ENCODE measurements at regions of chr1 and their contacts with region 1.

Region 1: GRCh38 chr1:159132271-159132881 is 39.0 kb upstream of the CADM3 start:
- DNase-seq: peak; percentile 87
- ATAC-seq: peak; percentile 51
- H3K4me3 Mint-ChIP-seq: no peak overlapping the region
- H3K27ac Mint-ChIP-seq: no peak overlapping the region
- H3K4me1 Mint-ChIP-seq: no peaks in the 10 kb centered on the region
- H3K27me3 Mint-ChIP-seq: peaks cover 5% of the 10 kb centered on the region

Region 2: GRCh38 chr1:159122005-159122621 is 10.3 kb before region 1 on chr1:
- CTCF ChIA-PET with region 1: interaction called, 10 read pairs
- POLR2A ChIA-PET with region 1: no interaction called
- intact Hi-C with region 1: no loop called
- DNase-seq: no peak
- ATAC-seq: peak; percentile 70
- H3K4me3 Mint-ChIP-seq: no peak overlapping the region
- H3K27ac Mint-ChIP-seq: no peak overlapping the region
- H3K4me1 Mint-ChIP-seq: peaks cover 15% of the 10 kb centered on the region
- H3K27me3 Mint-ChIP-seq: peaks cover 33% of the 10 kb centered on the region

Region 3: GRCh38 chr1:159161001-159161718 is 28.8 kb after region 1 on chr1:
- CTCF ChIA-PET with region 1: interaction called, 27 read pairs
- POLR2A ChIA-PET with region 1: no interaction called
- intact Hi-C with region 1: loop called (anchors 1 kb)
- DNase-seq: peak; percentile 82
- ATAC-seq: peak; percentile 83
- H3K4me3 Mint-ChIP-seq: no peak overlapping the region
- H3K27ac Mint-ChIP-seq: no peak overlapping the region
- H3K4me1 Mint-ChIP-seq: peaks cover 2% of the 10 kb centered on the region
- H3K27me3 Mint-ChIP-seq: peaks cover 39% of the 10 kb centered on the region

Region 4: GRCh38 chr1:159612211-159612885 is 480.0 kb after region 1 on chr1:
- CTCF ChIA-PET with region 1: no interaction called
- POLR2A ChIA-PET with region 1: no interaction called
- intact Hi-C with region 1: no loop called
- DNase-seq: no peak
- ATAC-seq: no peak
- H3K4me3 Mint-ChIP-seq: no peak overlapping the region
- H3K27ac Mint-ChIP-seq: no peak overlapping the region
- H3K4me1 Mint-ChIP-seq: no peaks in the 10 kb centered on the region
- H3K27me3 Mint-ChIP-seq: peaks cover 18% of the 10 kb centered on the region

Measured in activated CD4-positive, alpha-beta T cell treated with anti-CD3 and anti-CD28 coated beads for 36 hours (primary cell).